ENCODE measurements at regions of chr20 and their contacts with region 1.

Region 1: DNA sequence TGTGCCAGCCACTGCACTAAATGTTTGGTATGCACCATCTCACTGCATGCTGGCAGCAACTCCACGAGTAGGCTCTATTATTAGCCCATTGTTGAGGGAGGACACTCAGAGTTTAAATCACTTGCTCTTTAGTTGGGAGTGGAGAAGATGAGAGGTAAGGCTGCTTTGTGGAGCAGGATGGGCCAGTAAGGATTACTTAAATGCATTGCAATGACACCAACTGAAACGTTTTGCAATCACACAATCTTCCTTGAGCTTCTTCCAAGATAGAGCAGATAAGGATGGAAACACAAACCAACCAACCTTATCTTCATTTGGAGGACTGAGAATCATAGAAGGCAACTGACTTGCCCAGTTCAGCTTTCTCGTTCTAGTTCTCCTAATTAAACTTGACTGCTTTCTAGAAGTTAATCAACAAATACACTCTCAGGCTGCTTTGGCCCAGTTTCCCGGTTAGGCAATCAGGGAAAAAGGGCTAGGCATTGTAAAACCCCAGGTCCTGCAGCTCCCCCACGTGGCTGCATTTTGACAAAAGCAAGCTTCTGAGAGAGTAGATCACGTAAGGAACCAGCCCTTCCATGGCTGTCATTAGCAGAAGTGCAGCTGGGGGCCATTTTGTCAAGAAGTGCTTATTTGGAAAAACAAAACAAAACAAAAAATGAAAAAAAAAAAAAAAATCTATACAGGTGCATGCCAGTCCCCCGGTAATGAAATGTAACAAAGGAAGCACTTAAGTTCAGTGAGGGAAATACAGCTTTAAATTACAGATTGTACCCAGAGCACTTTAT is 130.6 kb downstream of the BCAS1 start:
- DNase-seq: peak; percentile 94
- ATAC-seq: peak; percentile 93

Region 2: GRCh38 chr20:53517146-53517545 is 422.6 kb before region 1 on chr20:
- intact Hi-C with region 1: no loop called
- DNase-seq: no peak
- ATAC-seq: no peak

Region 3: DNA sequence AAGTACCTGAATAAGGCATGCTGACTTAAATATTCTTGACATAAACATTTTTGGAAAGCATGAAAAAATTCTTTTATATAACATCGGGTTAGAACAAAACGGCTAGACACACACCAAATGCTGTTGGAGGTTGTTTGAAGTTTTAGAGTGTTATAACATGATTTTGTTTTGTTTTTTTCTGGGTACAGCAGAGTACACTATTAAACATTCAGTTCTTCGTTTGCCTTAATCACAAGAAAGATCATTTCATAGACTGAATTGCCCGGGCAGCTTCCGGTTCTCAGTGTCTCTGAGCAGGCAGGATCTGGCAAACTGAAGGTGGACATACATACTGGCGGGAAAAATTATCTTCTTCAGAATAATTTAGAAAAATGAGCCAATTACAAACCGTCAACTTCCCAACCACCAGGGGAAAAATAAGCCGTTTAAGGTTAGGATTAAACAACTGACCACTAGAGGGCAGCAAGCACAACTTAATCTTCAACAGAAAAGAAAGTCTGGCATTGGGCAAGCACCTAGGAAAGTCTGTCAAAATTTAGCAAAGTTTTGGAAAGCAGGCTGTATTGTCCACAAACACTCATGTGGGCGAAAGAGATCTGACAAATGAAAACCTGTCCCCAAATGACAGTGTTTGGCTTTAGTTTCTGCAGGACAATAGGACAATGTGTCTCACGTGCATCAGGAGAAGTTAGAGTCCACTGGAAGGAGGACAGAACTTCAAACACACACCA is 361.1 kb before region 1 on chr20:
- intact Hi-C with region 1: loop called (anchors 5 kb)
- DNase-seq: no peak
- ATAC-seq: peak; percentile 77

Region 4: DNA sequence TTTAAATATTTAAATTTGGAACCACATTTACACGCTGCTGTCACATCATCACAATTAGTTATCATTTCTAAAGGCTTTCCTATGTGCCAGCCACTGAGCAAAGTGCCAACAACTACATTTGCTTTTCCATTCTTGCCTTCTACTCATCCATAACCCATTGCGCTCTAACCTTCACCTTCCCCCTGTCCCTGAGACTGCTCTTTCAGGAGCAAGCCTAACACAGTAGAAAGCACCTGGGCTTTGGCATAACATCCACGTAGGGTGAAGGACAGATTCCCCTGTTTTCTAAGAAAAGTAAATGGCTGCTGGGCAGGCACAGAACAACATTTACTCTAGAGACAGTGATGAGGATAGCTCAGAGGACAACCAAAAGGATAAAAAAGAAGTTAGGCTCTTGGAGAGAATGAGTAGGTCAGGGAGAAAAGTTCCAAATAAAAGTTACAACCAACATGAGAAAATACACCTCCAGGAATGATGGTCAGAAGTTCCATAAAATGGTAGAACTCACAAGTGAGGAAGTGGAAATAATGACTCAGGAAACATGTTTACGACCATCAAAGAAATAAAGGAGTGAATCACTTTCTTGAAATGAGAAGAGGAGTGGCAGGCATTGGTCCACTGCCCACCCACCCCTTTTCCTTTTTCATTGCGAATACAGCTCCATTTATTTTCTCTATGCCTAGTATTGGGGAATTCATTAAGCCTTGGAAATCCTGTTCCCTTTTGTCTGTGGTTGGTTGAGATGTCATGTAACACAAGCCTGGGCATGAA is 345.4 kb after region 1 on chr20:
- intact Hi-C with region 1: no loop called
- DNase-seq: no peak
- ATAC-seq: no peak

Measured in left ventricle myocardium superior (tissue), 1 donor.